IMR-90 (cell line): ENCODE measurements at regions of chr4 and their contacts with region 1.

Region 1: DNA sequence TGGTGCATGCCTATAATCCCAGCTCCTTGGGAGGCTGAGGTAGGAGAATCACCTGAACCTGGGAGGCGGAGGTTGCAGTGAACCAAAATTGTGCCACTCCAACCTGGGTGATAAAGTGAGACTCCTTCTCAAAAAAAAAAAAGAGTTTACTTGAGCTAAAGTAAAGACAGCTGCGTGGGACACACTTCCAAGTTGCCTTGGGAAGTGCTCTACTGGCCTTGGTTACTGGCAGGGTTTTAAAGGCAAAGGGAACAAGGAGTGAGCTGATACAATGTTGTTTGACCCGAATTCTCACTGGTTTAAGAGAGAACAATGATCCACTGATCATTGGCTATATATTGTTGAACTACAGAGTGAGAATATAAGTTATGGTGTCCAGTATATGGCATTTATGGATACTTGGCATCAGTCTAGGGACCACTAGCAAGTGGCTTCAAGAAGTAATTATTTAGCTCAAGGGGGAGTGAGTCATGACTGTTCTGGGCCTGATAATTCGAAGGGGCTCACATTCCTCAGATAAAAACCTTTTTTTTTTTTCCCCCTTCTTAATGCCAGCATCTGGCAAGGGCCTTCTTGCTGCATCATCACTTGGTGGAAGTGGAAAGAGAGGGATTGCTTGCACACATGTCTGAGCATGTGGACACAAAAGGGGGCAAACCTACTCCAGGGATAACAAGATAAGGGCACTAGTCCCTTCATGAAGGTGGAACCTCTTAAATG is 32.3 kb downstream of the GRK4 start:
- DNase-seq: no peak
- ATAC-seq: no peak
- H3K4me3 ChIP-seq: no peak overlapping the region
- H3K27ac ChIP-seq: no peak overlapping the region
- H3K4me1 ChIP-seq: no peaks in the 10 kb centered on the region
- H3K27me3 ChIP-seq: peaks cover 14% of the 10 kb centered on the region
- CTCF ChIP-seq: no peak
- POLR2A ChIP-seq: no peak
- RAD21 ChIP-seq: no peak

Region 2: DNA sequence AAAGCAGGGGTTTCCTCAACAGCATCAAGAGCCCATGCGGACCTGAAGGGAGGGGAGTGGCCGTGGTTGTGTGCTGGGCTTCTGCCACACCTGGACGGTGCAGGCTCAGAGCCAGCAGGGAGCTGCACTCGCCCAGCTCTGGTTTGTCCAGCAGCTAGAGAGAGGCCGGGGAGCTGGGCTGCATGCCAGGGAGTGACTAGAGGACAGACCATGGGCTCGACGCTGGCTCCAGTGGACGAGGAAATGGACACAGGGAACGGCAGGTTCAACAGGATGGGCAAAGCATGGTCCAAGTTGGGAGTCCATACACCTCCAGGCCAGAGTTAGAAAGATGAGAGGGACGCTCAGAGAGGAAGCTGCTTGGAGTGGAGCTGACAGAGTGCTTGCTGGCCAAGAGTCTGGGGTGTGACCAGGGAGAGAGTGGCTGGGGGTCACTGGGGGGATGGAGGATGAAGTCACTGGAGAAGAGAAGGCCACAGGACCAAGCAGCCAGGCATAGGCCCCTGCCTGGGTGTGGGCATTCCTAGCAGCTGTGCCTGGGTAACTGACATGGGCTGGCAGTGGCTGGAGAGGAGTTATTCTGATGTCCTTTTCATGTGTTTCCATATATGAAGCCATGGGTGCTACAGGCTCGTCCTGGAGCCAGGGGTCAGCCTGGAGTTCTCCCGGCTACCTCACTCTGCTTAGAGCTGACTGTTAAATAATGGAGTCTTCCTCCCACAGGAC is 35.8 kb after region 1 on chr4:
- CTCF ChIA-PET with region 1: interaction called, 9 read pairs
- POLR2A ChIA-PET with region 1: no interaction called
- dilution Hi-C with region 1: no loop called
- in situ Hi-C with region 1: no loop called
- intact Hi-C with region 1: loop called (anchors 5 kb)
- DNase-seq: no peak
- ATAC-seq: peak; percentile 53
- H3K4me3 ChIP-seq: no peak overlapping the region
- H3K27ac ChIP-seq: no peak overlapping the region
- H3K4me1 ChIP-seq: no peaks in the 10 kb centered on the region
- H3K27me3 ChIP-seq: peaks cover 36% of the 10 kb centered on the region
- CTCF ChIP-seq: no peak
- POLR2A ChIP-seq: no peak
- RAD21 ChIP-seq: no peak